Heart right ventricle (tissue), 16 donors: ENCODE measurements at regions of chr21 and their contacts with region 1.

Region 1: GRCh38 chr21:25561668-25562641 is 45.3 kb downstream of the MRPL39 start:
- DNase-seq: peak; percentile 31 to 44
- ATAC-seq: peak; percentile 75 to 90 (median 87)
- H3K4me3 ChIP-seq: peak overlapping the region in 9 of 10 donors; percentile 36 to 71 (median 62)
- H3K27ac ChIP-seq: peak overlapping the region in 8 of 10 donors; percentile 12 to 88 (median 47)
- H3K4me1 ChIP-seq: peaks cover 0 to 48% (median 8%) of the 10 kb centered on the region in 9 donors
- H3K27me3 ChIP-seq: no peaks in the 10 kb centered on the region
- CTCF ChIP-seq: peak in 4 of 9 donors; percentile 30 to 38 (median 32)

Region 2: DNA sequence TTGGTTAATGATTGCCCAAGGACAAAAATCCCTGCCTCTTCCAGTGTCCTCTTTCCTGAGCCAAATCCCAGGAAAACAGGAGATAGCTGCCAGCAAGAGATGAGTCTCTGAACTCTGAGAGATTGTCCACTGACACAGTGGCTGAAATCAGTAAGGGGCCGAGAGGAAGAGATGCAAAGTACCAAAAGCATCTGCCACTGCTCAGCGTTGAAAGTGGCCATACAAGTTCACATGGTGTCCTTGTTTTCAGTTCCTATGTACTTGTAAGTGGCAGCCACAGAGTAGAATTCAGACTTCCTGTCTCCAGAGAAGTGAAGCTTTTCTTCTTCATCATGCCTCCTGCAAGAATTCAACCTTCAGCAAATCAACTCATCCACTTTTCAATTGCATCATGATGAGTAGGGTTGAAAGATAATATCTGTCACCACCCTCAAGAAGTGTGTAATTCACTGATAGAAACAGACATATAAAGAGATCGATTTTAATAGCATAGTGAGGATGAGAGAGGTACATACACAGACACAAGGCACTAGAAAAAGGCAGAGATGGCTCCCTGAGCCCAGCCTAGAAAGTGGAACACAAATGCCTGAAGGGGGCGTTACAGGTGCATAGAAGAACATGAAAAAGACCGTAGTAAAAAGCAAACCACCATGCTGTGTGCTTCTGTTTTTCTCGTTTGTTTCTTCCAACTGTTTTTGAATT is 140.5 kb before region 1 on chr21:
- intact Hi-C with region 1: loop called in 5 of 10 experiments (anchors 10 kb)
- DNase-seq: peak in 1 of 2 donors; percentile 17
- ATAC-seq: peak in 6 of 8 donors; percentile 33 to 56 (median 50)
- H3K4me3 ChIP-seq: no peak overlapping the region
- H3K27ac ChIP-seq: no peak overlapping the region
- H3K4me1 ChIP-seq: peaks cover 0 to 8% (median 0%) of the 10 kb centered on the region in 9 donors
- H3K27me3 ChIP-seq: peaks cover 0 to 23% (median 0%) of the 10 kb centered on the region in 7 donors
- CTCF ChIP-seq: peak in 7 of 9 donors; percentile 37 to 72 (median 56)

Region 3: DNA sequence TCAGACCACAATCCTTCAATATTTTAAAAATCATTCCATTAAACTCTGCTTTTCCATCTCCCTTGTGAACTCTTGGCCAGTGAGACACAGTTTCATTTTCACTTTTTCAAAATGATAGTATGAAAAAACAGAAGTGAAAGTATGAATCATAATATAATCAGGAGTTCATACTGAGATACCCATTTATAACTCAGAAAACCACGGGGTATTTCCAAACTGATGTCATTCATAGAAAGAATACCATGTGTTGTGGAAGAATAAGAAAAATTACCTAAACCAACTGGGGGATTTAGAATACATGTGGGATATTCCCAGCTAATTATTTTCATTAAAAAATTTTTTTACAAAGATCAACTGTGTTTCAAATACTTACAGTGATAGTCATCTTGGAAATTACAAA is 104.5 kb before region 1 on chr21:
- intact Hi-C with region 1: loop called in 1 of 10 experiments (anchors 10 kb)
- DNase-seq: no peak
- ATAC-seq: peak in 3 of 8 donors; percentile 34 to 52 (median 40)
- H3K4me3 ChIP-seq: peak overlapping the region in 1 of 10 donors; percentile 22
- H3K27ac ChIP-seq: peak overlapping the region in 2 of 10 donors; percentile 13 to 72
- H3K4me1 ChIP-seq: peaks cover 0 to 15% (median 0%) of the 10 kb centered on the region in 9 donors
- H3K27me3 ChIP-seq: no peaks in the 10 kb centered on the region
- CTCF ChIP-seq: no peak

Region 4: GRCh38 chr21:25501996-25502665 is 59.8 kb before region 1 on chr21:
- intact Hi-C with region 1: loop called in 1 of 10 experiments (anchors 10 kb)
- DNase-seq: no peak
- ATAC-seq: peak in 1 of 8 donors; percentile 15
- H3K4me3 ChIP-seq: no peak overlapping the region
- H3K27ac ChIP-seq: no peak overlapping the region
- H3K4me1 ChIP-seq: peaks cover 0 to 9% (median 0%) of the 10 kb centered on the region in 9 donors
- H3K27me3 ChIP-seq: no peaks in the 10 kb centered on the region
- CTCF ChIP-seq: no peak

Region 5: GRCh38 chr21:25515484-25516405 is 46.2 kb before region 1 on chr21:
- intact Hi-C with region 1: no loop called
- DNase-seq: no peak
- ATAC-seq: no peak
- H3K4me3 ChIP-seq: no peak overlapping the region
- H3K27ac ChIP-seq: no peak overlapping the region
- H3K4me1 ChIP-seq: no peaks in the 10 kb centered on the region
- H3K27me3 ChIP-seq: no peaks in the 10 kb centered on the region
- CTCF ChIP-seq: no peak

Region 6: GRCh38 chr21:25539606-25540005 is 22.3 kb before region 1 on chr21:
- intact Hi-C with region 1: no loop called
- DNase-seq: no peak
- ATAC-seq: no peak
- H3K4me3 ChIP-seq: no peak overlapping the region
- H3K27ac ChIP-seq: no peak overlapping the region
- H3K4me1 ChIP-seq: no peaks in the 10 kb centered on the region
- H3K27me3 ChIP-seq: no peaks in the 10 kb centered on the region
- CTCF ChIP-seq: no peak